GM12878 (cell line): ENCODE measurements at regions of chr3 and their contacts with region 1.

Region 1: DNA sequence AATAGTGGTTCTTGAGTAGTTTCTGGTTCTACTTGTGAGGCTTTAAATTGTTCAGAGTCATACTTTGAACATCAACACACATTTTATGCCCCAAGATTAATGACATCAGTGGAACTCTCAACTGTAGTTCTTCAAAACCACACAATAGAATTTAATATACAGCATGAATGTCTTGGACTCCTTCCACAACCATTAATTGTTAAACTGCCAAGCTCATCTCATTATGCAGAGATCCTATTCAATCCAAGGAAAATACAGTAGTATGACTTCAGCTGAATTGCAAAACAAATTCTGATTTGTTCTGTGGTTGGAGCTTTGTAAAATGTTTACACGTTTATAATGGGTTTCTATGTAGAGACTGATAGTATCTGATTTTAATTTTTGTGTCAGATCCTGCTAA is 199.2 kb upstream of the SLC2A2 start:
- DNase-seq: no peak
- ATAC-seq: no peak
- H3K4me3 ChIP-seq: no peak overlapping the region
- H3K27ac ChIP-seq: no peak overlapping the region; the same call in 1 of the 2 replicates
- H3K4me1 ChIP-seq: peaks cover 17% of the 10 kb centered on the region
- H3K27me3 ChIP-seq: no peaks in the 10 kb centered on the region
- CTCF ChIP-seq: no peak
- EP300 ChIP-seq: no peak
- POLR2A ChIP-seq: no peak
- RAD21 ChIP-seq: no peak

Region 2: GRCh38 chr3:171206283-171206682 is 19.4 kb before region 1 on chr3:
- CTCF ChIA-PET with region 1: interaction called, 11 read pairs
- POLR2A ChIA-PET with region 1: interaction called, 3 read pairs
- RAD21 ChIA-PET with region 1: no interaction called
- SMC1A ChIA-PET with region 1: interaction called, 15 read pairs
- in situ Hi-C with region 1: no loop called
- intact Hi-C with region 1: no loop called
- DNase-seq: peak; percentile 62
- ATAC-seq: peak; percentile 83
- H3K4me3 ChIP-seq: no peak overlapping the region
- H3K27ac ChIP-seq: peak overlapping the region; percentile 10; the same call in 1 of the 2 replicates
- H3K4me1 ChIP-seq: peaks cover 4% of the 10 kb centered on the region; the same call in 1 of the 2 replicates
- H3K27me3 ChIP-seq: no peaks in the 10 kb centered on the region
- CTCF ChIP-seq: no peak
- EP300 ChIP-seq: no peak
- POLR2A ChIP-seq: no peak
- RAD21 ChIP-seq: no peak

Region 3: DNA sequence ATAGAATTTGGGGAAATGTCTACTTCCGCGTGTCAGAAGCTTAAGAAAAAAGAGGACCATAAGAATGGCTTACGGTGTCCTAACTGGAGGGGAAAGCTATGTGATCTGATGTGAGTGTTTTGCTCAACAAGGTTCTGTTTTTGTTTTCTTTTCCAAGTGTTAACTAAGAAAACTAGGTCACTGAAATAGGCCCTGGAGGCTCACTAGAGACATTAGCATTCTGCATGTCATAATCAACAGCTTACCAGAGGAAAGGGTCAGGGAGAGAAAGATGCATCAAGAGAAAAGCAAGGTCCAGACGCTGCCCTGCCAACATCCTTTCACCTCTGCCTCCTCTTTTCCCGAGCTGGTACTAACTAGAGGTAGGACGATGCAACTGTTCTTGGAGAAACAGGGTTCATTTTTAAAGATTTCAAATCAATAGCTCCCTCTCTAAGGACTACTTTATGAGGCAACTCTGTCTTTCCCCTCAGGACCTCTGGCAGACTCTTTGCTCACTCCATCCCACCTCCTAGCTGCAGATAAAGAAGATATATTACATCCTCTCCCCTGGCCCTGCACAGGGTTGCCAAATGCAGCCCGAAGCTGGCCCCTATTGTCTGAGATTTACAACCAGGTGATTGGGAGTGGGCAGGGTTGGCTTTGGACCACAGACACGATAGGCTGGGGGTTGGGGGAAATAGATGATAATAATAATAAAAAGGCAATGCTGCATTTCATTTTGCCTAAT is 10.7 kb after region 1 on chr3:
- CTCF ChIA-PET with region 1: interaction called, 9 read pairs
- POLR2A ChIA-PET with region 1: interaction called, 3 read pairs
- RAD21 ChIA-PET with region 1: interaction called, 7 read pairs
- SMC1A ChIA-PET with region 1: interaction called, 12 read pairs
- in situ Hi-C with region 1: no loop called
- intact Hi-C with region 1: no loop called
- DNase-seq: no peak
- ATAC-seq: peak; percentile 10; the same call in 1 of the 3 replicates
- H3K4me3 ChIP-seq: no peak overlapping the region
- H3K27ac ChIP-seq: peak overlapping the region; percentile 40; the same call in 1 of the 2 replicates
- H3K4me1 ChIP-seq: peaks cover 55% of the 10 kb centered on the region
- H3K27me3 ChIP-seq: no peaks in the 10 kb centered on the region
- CTCF ChIP-seq: no peak
- EP300 ChIP-seq: no peak
- POLR2A ChIP-seq: no peak
- RAD21 ChIP-seq: no peak